Activated CD4-positive, alpha-beta memory T cell treated with anti-CD3 and anti-CD28 coated beads for 36 hours (primary cell): ENCODE measurements at regions of chr20 and their contacts with region 1.

Region 1: GRCh38 chr20:52972190-52972937 is at the start of gene TSHZ2:
- DNase-seq: peak; percentile 74
- H3K4me3 Mint-ChIP-seq: peak within 1 kb of the TSS; percentile 87
- H3K27ac Mint-ChIP-seq: peak within 1 kb of the TSS; percentile 95
- H3K4me1 Mint-ChIP-seq: peaks cover 30% of the 10 kb centered on the region
- H3K27me3 Mint-ChIP-seq: peaks cover 12% of the 10 kb centered on the region
- total RNA-seq, gene TSHZ2: 28.9 to 36.0 TPM

Region 2: DNA sequence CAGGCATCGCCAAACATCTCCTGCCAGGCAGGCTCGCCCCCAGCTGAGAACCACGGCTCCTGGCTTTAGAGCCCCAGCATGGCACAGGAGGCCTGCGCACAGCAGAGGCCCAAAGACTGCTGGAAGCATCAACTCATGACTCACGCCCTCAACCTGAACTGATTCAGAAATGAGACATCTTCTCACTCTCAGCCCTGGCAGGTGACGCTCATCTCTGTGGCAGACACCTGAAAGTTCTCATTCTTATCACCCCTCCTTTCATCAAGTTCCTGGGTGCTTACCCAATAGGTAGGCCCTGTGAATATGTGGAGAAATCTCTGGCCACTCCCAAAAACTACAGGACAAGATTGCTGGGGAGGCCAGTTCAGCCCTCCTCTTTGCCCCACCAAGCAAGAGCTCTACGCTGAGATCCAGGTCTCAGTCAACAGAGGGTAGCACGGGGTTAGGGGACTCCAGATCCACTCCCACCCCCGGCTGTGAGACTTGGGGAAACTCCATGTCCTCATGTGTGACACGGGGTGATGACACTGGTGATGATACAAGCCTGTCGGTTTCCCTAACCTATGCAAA is 1441.1 kb before region 1 on chr20:
- CTCF ChIA-PET with region 1: no interaction called
- POLR2A ChIA-PET with region 1: no interaction called
- intact Hi-C with region 1: loop called (anchors 10 kb)
- DNase-seq: peak; percentile 91
- H3K4me3 Mint-ChIP-seq: peak overlapping the region; percentile 84
- H3K27ac Mint-ChIP-seq: peak overlapping the region; percentile 94
- H3K4me1 Mint-ChIP-seq: peaks cover 94% of the 10 kb centered on the region
- H3K27me3 Mint-ChIP-seq: no peaks in the 10 kb centered on the region

Region 3: GRCh38 chr20:52869698-52870501 is 102.5 kb before region 1 on chr20:
- CTCF ChIA-PET with region 1: no interaction called
- POLR2A ChIA-PET with region 1: interaction called, 3 read pairs
- intact Hi-C with region 1: loop called (anchors 5 kb)
- DNase-seq: no peak
- H3K4me3 Mint-ChIP-seq: no peak overlapping the region
- H3K27ac Mint-ChIP-seq: peak overlapping the region; percentile 64
- H3K4me1 Mint-ChIP-seq: peaks cover 24% of the 10 kb centered on the region
- H3K27me3 Mint-ChIP-seq: peaks cover 2% of the 10 kb centered on the region

Region 4: GRCh38 chr20:52948491-52948890 is 23.9 kb before region 1 on chr20:
- CTCF ChIA-PET with region 1: no interaction called
- POLR2A ChIA-PET with region 1: no interaction called
- intact Hi-C with region 1: no loop called
- DNase-seq: no peak
- H3K4me3 Mint-ChIP-seq: no peak overlapping the region
- H3K27ac Mint-ChIP-seq: no peak overlapping the region
- H3K4me1 Mint-ChIP-seq: no peaks in the 10 kb centered on the region
- H3K27me3 Mint-ChIP-seq: peaks cover 7% of the 10 kb centered on the region

Region 5: DNA sequence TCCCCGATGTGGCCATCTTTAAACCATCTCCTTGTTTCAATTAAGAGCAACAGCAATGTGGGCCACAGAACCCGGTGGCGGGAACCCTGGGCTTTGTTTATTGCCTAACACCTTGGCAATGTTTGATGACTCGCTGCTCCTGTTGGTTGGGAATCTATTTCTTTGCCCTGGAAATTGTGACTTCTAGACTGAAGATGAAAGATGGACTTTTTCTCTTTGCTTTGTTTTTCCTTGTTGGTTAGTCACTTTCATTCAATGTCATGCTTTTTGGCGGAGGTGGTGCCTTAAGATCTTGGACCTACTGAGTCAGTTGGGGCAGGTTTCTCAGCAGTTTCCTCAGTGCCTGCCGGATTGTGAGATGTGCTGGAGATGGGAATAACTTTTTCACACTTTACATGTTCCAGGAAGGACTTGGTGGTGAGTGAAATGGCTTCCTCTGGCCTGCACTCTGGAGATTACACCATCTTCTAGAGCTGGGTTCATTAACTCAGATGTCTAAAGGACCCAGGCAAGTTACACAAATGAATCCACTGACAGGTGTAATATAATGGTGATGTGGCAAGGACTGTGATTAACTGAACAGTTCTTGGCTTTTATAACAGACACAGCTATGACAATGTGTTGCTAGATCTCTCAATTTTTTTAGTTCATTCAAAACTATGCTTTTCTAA is 56.1 kb after region 1 on chr20:
- CTCF ChIA-PET with region 1: interaction called, 4 read pairs
- POLR2A ChIA-PET with region 1: interaction called, 24 read pairs
- intact Hi-C with region 1: no loop called
- DNase-seq: peak; percentile 66
- H3K4me3 Mint-ChIP-seq: peak overlapping the region; percentile 2
- H3K27ac Mint-ChIP-seq: peak overlapping the region; percentile 80
- H3K4me1 Mint-ChIP-seq: peaks cover 70% of the 10 kb centered on the region
- H3K27me3 Mint-ChIP-seq: no peaks in the 10 kb centered on the region

Region 6: GRCh38 chr20:53149148-53149889 is 177.0 kb after region 1 on chr20:
- CTCF ChIA-PET with region 1: interaction called, 8 read pairs
- POLR2A ChIA-PET with region 1: interaction called, 25 read pairs
- intact Hi-C with region 1: loop called (anchors 1 kb)
- DNase-seq: no peak
- H3K4me3 Mint-ChIP-seq: no peak overlapping the region
- H3K27ac Mint-ChIP-seq: no peak overlapping the region
- H3K4me1 Mint-ChIP-seq: peaks cover 54% of the 10 kb centered on the region
- H3K27me3 Mint-ChIP-seq: no peaks in the 10 kb centered on the region

Region 7: DNA sequence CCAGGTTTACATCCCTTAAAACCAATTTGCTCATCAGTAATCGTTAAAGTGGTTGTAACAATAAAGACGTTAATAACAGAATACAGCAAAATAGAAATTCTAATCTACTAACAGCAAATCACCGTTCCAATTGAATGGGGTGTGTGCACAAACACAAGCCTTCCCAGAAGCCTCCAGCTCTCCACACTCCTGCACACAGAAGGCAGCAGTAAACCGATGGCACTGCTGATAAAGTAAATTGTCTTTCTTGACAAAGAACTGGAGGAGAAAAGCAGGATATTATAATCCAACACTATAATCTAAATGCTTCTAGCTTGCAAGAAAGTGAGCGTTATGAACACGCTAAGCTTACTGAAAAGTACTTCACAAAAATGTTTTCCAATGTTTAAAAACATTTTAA is 614.3 kb after region 1 on chr20:
- CTCF ChIA-PET with region 1: no interaction called
- POLR2A ChIA-PET with region 1: no interaction called
- intact Hi-C with region 1: loop called (anchors 5 kb)
- DNase-seq: peak; percentile 8
- H3K4me3 Mint-ChIP-seq: peak overlapping the region; percentile 76
- H3K27ac Mint-ChIP-seq: peak overlapping the region; percentile 97
- H3K4me1 Mint-ChIP-seq: peaks cover 61% of the 10 kb centered on the region
- H3K27me3 Mint-ChIP-seq: no peaks in the 10 kb centered on the region